Activated CD4-positive, alpha-beta memory T cell treated with anti-CD3 and anti-CD28 coated beads for 36 hours (primary cell): ENCODE measurements at regions of chr1 and their contacts with region 1.

Region 1: GRCh38 chr1:66981679-66982078 is 56.9 kb downstream of the MIER1 start:
- DNase-seq: peak; percentile 47
- H3K4me3 Mint-ChIP-seq: peak overlapping the region; percentile 53
- H3K27ac Mint-ChIP-seq: peak overlapping the region; percentile 72
- H3K4me1 Mint-ChIP-seq: peaks cover 42% of the 10 kb centered on the region
- H3K27me3 Mint-ChIP-seq: no peaks in the 10 kb centered on the region

Region 2: DNA sequence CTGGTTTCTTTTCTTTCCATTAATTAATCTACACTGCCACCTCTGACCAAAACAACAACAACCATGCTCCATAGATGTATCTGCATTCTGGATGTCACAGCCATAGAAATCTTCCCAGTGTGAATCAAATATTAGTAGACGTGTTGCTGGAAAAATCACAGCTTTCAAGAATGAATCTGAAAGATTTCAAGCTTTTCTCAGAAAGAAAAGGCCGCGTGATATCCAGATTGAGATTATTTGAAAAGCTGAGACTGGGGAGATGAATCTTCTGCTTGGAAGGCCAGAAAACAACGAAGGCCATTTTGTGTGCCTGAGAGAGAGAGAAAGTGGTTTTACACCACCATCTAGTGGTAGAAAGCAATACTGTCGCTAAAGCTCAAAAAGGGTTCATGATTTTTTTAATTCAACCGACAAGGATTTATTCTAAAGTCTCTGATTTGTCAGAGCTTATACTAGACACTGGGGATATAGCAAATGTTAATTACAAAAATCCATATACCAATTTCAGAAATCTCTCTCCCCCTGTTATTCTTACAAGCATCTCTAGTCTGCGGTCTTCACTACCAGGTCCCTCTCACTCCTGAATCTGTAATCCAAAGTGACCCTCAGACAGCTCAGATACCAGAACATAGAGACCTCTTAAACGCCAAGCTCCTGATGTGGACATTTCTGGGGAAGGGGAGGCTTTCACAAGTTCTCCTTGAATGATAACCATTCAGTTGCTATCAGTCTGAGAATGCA is 535.2 kb before region 1 on chr1:
- CTCF ChIA-PET with region 1: no interaction called
- POLR2A ChIA-PET with region 1: no interaction called
- intact Hi-C with region 1: no loop called
- DNase-seq: peak; percentile 23
- H3K4me3 Mint-ChIP-seq: peak overlapping the region; percentile 6
- H3K27ac Mint-ChIP-seq: peak overlapping the region; percentile 86
- H3K4me1 Mint-ChIP-seq: peaks cover 21% of the 10 kb centered on the region
- H3K27me3 Mint-ChIP-seq: peaks cover 4% of the 10 kb centered on the region

Region 3: DNA sequence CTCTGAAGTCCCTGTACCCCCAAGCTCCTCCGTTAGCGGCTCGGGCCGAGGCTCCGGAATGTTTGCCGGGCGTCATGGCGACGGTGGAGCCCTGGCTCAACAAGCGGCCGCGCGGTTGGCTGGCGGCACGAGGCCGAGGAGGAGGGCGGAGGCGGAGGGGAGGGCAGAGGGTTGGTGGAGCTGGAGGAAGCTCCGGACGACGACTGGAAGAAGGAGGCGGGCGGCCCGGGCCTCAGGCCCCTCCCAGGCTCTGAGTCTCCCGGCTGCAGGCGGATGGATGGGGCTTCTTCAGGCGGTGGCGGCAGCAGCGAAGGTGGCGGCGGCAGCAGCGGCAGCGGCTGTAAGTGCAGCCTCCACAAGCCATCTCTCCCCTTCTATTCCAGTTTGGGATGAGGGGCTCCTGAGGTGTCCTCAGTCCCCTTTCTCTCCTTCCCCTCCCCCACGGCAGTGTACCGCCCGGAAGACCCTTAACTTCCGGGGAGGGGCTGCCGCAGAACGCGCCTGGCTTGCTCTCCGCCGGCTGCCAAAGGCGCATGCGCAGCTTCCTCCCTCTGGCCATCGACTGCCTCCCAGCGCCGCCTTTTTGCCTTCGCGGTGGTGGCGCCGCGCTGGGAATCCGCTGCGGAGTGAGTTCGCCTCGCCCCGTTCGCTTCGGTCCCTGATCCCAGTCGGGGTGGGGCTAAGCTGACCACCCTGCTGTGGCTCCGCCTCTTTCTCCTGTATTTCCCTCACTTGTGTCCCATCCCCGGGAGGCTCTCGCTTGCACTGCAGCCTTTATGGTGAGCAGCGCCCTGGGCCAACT is 56.7 kb before region 1 on chr1 and contains the starts of genes DNAI4 and MIER1:
- CTCF ChIA-PET with region 1: no interaction called
- POLR2A ChIA-PET with region 1: interaction called, 3 read pairs
- intact Hi-C with region 1: loop called (anchors 1 kb)
- DNase-seq: peak; percentile 99
- H3K4me3 Mint-ChIP-seq: peak within 1 kb of the TSS; percentile 97
- H3K27ac Mint-ChIP-seq: peak within 1 kb of the TSS; percentile 96
- H3K4me1 Mint-ChIP-seq: peaks cover 53% of the 10 kb centered on the region
- H3K27me3 Mint-ChIP-seq: no peaks in the 10 kb centered on the region
- total RNA-seq, gene DNAI4: 1.4 to 1.6 TPM
- total RNA-seq, gene MIER1: 54.7 to 58.8 TPM

Region 4: DNA sequence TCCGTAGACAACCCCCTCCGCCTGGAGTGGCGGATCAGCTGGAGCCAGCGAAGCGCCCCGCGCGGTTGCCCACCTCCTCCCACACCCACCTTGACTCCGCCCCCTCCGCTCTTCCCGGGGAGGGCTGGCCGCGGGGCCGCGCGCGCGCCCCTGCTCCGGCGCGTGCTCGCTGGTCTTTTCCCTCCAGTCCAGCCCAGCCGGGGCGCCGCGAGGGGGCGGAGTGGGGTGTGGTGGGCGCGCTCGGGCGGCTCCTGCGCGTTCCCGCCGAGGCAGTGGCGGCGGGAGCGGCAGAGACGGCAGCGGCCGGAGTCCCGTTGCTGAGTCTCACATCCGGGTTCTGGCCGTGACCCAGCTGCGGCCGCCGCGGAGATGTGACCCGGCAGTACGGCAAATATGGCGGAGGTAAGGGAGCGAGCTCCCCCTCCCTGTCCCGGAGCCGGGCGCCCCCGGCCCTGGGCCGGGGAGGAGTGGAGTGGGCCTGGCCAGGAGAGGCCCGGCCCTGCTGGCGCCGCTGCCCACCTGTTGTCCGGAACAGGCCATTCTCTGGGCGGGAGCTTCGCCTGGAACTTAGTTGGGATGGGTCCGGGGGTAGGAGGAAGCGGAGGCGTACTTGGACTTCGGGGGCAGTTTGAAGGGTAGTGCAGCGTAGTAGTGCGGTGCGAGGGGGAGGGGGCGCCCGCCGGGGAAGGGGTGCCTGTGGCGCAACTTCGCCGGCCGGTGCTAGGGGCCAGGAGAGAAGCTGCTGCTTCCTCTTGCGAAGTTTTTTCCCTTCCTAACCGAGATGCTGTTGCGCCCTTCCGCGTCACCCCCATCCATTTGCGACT is 51.5 kb before region 1 on chr1:
- CTCF ChIA-PET with region 1: no interaction called
- POLR2A ChIA-PET with region 1: interaction called, 3 read pairs
- intact Hi-C with region 1: loop called (anchors 1 kb)
- DNase-seq: peak; percentile 96
- H3K4me3 Mint-ChIP-seq: peak overlapping the region; percentile 90
- H3K27ac Mint-ChIP-seq: peak overlapping the region; percentile 96
- H3K4me1 Mint-ChIP-seq: peaks cover 57% of the 10 kb centered on the region
- H3K27me3 Mint-ChIP-seq: no peaks in the 10 kb centered on the region

Region 5: GRCh38 chr1:66954208-66954607 is 27.5 kb before region 1 on chr1:
- CTCF ChIA-PET with region 1: interaction called, 3 read pairs
- POLR2A ChIA-PET with region 1: no interaction called
- intact Hi-C with region 1: loop called (anchors 2 kb)
- DNase-seq: no peak
- H3K4me3 Mint-ChIP-seq: no peak overlapping the region
- H3K27ac Mint-ChIP-seq: peak overlapping the region; percentile 74
- H3K4me1 Mint-ChIP-seq: peaks cover 47% of the 10 kb centered on the region
- H3K27me3 Mint-ChIP-seq: no peaks in the 10 kb centered on the region

Region 6: DNA sequence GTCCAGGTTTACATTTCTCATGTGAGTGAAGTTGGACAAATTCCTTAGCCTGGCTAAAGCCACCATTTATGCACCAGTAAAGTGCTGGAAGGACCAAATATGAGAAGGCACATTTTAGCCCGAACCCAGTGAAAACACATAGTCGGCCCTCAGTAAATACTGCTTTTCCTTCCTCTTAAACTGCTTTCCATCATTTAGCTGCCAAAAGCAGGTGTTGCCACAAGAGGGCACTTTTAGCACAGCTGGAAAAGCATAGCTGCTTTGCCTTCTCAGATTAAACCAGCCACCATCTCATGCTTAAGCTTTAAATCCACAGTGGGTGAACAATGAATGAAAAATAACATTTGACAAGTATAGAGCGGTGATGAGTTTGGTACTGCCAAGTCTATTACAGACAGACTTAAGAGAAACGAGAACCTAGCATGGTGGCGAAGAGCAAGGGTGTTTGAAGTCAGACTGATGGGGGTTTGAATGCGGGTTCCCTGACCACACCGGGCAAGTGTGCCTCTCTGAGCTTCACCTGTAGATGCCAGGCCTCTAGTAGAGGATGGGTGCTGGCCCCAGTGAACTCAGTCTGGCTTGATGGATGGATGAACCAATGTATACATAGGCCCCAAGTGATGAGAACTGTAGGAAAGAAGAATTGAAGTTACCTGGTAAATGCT is 14.5 kb after region 1 on chr1:
- CTCF ChIA-PET with region 1: interaction called, 10 read pairs
- POLR2A ChIA-PET with region 1: interaction called, 3 read pairs
- intact Hi-C with region 1: no loop called
- DNase-seq: peak; percentile 78
- H3K4me3 Mint-ChIP-seq: no peak overlapping the region
- H3K27ac Mint-ChIP-seq: peak overlapping the region; percentile 25
- H3K4me1 Mint-ChIP-seq: peaks cover 16% of the 10 kb centered on the region
- H3K27me3 Mint-ChIP-seq: no peaks in the 10 kb centered on the region